ENCODE measurements at regions of chr13 and their contacts with region 1.

Region 1: DNA sequence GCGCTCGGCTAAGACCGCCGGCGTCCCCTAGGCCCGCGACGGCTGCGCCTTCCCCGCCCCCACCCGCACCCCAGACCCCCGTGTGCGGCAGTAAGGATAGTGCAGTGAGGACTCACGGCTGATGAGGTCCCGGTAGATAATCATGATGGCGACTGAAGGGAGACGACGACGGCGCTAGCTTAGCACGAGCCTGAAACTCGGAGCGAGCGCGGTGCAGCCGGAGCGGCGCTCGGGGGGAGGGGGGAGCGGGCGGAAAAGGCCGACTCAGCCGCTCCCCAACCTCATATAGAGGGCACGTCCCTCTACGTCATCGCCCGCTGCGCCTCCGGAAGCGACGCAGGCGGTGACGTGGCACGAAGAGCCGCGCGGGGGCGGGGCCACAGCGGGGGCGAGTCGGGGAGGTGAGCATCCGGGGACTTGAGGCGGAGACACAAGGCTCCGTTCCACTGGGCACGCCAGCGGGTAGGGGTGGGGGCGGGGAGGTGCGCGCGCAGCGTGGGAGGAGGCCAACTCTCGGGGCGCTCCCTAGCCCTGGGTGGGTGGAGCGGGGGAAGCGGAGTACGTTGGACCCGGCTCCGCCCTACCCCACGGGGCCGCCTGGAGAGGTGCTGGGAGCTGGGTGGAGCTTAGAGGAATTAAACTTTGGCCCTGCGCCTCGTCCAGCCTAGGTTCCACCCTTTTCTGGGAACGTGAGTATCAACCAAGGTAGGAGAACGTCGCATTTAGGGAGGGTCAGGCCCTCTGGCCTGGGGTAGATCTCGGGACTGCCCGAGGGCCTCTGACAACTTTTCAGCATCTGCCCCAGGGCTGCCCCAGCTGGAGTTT is at the start of gene TPT1:
- DNase-seq: peak; percentile 99
- H3K4me3 Mint-ChIP-seq: peak within 1 kb of the TSS; percentile 98
- H3K27ac Mint-ChIP-seq: peak within 1 kb of the TSS; percentile 100
- H3K4me1 Mint-ChIP-seq: peaks cover 50% of the 10 kb centered on the region
- H3K27me3 Mint-ChIP-seq: no peaks in the 10 kb centered on the region
- total RNA-seq, gene TPT1: 4,825 to 5,097 TPM

Region 2: DNA sequence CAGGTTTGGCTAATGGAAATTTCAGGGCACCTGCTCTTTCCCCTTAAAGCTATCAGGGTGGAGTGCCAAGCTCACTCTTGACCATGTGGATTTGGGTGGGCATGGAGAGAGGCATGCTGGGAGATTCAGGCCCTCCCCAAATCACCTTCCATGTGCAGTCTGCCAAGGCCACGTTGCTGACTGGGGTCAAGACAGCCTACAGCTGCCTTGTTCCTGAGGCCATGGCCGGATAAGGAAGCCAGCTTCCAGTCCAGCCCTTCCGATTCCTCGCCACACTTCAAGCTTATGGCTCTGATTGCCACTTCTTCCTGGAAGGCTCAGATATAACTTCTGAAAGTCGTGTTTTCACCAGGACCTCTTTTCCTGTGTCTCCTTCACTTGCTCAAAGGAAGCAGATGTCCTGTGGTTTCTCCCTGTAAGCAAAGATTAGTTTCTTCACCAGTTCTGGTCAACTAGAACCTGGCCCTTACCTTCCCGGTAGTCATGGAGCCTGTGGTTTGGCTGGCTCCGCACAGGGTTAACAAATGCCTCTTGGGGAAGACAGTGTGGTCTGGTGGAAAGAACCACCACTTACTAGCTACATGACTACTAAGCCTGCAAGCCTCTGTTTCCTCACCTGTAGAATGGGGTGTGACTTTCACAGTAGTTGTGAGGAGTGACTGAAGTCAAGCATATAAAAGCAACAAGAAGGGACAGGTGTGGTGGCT is 16.0 kb after region 1 on chr13:
- CTCF ChIA-PET with region 1: interaction called, 11 read pairs
- POLR2A ChIA-PET with region 1: interaction called, 5 read pairs
- DNase-seq: peak; percentile 24
- H3K4me3 Mint-ChIP-seq: no peak overlapping the region
- H3K27ac Mint-ChIP-seq: peak overlapping the region; percentile 78
- H3K4me1 Mint-ChIP-seq: peaks cover 42% of the 10 kb centered on the region
- H3K27me3 Mint-ChIP-seq: no peaks in the 10 kb centered on the region

Region 3: GRCh38 chr13:45370922-45371406 is 29.8 kb after region 1 on chr13:
- CTCF ChIA-PET with region 1: interaction called, 16 read pairs
- POLR2A ChIA-PET with region 1: interaction called, 4 read pairs
- DNase-seq: peak; percentile 53
- H3K4me3 Mint-ChIP-seq: no peak overlapping the region
- H3K27ac Mint-ChIP-seq: peak overlapping the region; percentile 42
- H3K4me1 Mint-ChIP-seq: peaks cover 47% of the 10 kb centered on the region
- H3K27me3 Mint-ChIP-seq: no peaks in the 10 kb centered on the region

Measured in activated CD4-positive, alpha-beta T cell treated with anti-CD3 and anti-CD28 coated beads, Interleukin-2, amount 10 ng/mL, durations not matched to agents 7 days and 5 days (primary cell).